ENCODE measurements at regions of chr15 and their contacts with region 1.

Region 1: DNA sequence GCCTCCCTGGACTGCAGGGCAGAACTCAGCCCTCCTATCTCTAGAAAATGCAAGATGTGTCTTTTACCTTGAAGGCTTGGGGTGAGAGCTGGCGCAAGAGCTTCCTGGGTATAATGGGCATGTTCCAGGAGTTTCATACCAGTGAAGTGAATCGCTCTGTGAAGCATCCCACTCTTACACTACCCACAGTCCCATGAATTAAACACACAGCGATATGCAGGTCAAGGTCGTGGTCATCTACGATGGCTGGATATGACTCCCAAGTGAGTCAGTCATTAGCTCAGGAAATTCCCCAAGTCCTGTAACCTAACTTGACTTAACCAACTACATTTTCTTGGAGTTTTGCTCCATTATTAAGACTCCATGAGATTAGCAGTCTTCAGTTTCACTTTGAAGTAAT is 439.7 kb downstream of the NTRK3 start:
- DNase-seq: no peak
- ATAC-seq: no peak
- H3K4me3 ChIP-seq: no peak overlapping the region
- H3K4me3 Mint-ChIP-seq: no peak overlapping the region
- H3K27ac ChIP-seq: no peak overlapping the region
- H3K27ac Mint-ChIP-seq: no peak overlapping the region
- H3K4me1 ChIP-seq: no peaks in the 10 kb centered on the region
- H3K4me1 Mint-ChIP-seq: no peaks in the 10 kb centered on the region
- H3K27me3 ChIP-seq: no peaks in the 10 kb centered on the region
- H3K27me3 Mint-ChIP-seq: no peaks in the 10 kb centered on the region
- CTCF ChIP-seq: no peak

Region 2: GRCh38 chr15:86969364-86969763 is 847.4 kb before region 1 on chr15:
- CTCF ChIA-PET with region 1: no interaction called
- POLR2A ChIA-PET with region 1: no interaction called
- intact Hi-C with region 1: loop called in 1 of 2 experiments (anchors 5 kb)
- DNase-seq: no peak
- ATAC-seq: no peak
- H3K4me3 ChIP-seq: no peak overlapping the region
- H3K4me3 Mint-ChIP-seq: no peak overlapping the region
- H3K27ac ChIP-seq: no peak overlapping the region
- H3K27ac Mint-ChIP-seq: no peak overlapping the region
- H3K4me1 ChIP-seq: no peaks in the 10 kb centered on the region
- H3K4me1 Mint-ChIP-seq: no peaks in the 10 kb centered on the region
- H3K27me3 ChIP-seq: no peaks in the 10 kb centered on the region
- H3K27me3 Mint-ChIP-seq: no peaks in the 10 kb centered on the region
- CTCF ChIP-seq: no peak

Region 3: DNA sequence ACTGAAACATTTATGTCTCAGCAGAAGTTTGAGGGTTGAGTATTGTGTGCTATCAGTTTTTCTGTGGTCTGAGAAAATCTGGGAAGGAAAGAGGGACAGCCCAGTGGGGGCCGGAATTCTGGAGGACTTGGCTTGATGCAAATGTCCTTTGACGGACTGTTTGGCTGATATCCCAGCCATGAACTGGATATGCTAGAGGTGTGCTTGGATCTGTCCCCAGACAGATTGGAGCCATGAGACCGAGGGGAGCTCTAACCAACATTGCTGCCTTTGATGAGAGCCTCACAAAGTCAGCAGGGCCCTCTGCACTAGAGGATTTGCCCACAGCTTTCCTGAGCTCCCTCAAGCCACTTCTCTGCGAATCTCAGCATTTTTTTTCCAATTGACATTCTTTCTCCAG is 34.1 kb after region 1 on chr15:
- CTCF ChIA-PET with region 1: no interaction called
- POLR2A ChIA-PET with region 1: no interaction called
- intact Hi-C with region 1: no loop called
- DNase-seq: no peak
- ATAC-seq: no peak
- H3K4me3 ChIP-seq: no peak overlapping the region
- H3K4me3 Mint-ChIP-seq: no peak overlapping the region
- H3K27ac ChIP-seq: no peak overlapping the region
- H3K27ac Mint-ChIP-seq: no peak overlapping the region
- H3K4me1 ChIP-seq: no peaks in the 10 kb centered on the region
- H3K4me1 Mint-ChIP-seq: no peaks in the 10 kb centered on the region
- H3K27me3 ChIP-seq: no peaks in the 10 kb centered on the region
- H3K27me3 Mint-ChIP-seq: peaks cover 6% of the 10 kb centered on the region
- CTCF ChIP-seq: no peak